Activated naive CD4-positive, alpha-beta T cell treated with anti-CD3 and anti-CD28 coated beads, Interleukin-2, amount 10 ng/mL, durations not matched to agents 7 days and 5 days (primary cell): ENCODE measurements at regions of chr19 and their contacts with region 1.

Region 1: GRCh38 chr19:8355631-8356402 is 8.1 kb upstream of the ANGPTL4 start:
- DNase-seq: no peak
- H3K4me3 Mint-ChIP-seq: no peak overlapping the region
- H3K27ac Mint-ChIP-seq: no peak overlapping the region
- H3K4me1 Mint-ChIP-seq: peaks cover 3% of the 10 kb centered on the region
- H3K27me3 Mint-ChIP-seq: peaks cover 53% of the 10 kb centered on the region

Region 2: GRCh38 chr19:8224394-8225145 is 131.2 kb before region 1 on chr19:
- CTCF ChIA-PET with region 1: no interaction called
- DNase-seq: no peak
- H3K4me3 Mint-ChIP-seq: no peak overlapping the region
- H3K27ac Mint-ChIP-seq: peak overlapping the region; percentile 33
- H3K4me1 Mint-ChIP-seq: no peaks in the 10 kb centered on the region
- H3K27me3 Mint-ChIP-seq: no peaks in the 10 kb centered on the region

Region 3: GRCh38 chr19:8342684-8343482 is 12.9 kb before region 1 on chr19 and contains the start of gene KANK3:
- CTCF ChIA-PET with region 1: interaction called, 37 read pairs
- DNase-seq: peak; percentile 97
- H3K4me3 Mint-ChIP-seq: peak within 1 kb of the TSS; percentile 85
- H3K27ac Mint-ChIP-seq: peak within 1 kb of the TSS; percentile 77
- H3K4me1 Mint-ChIP-seq: peaks cover 18% of the 10 kb centered on the region
- H3K27me3 Mint-ChIP-seq: peaks cover 82% of the 10 kb centered on the region

Region 4: GRCh38 chr19:8389891-8390616 is 34.2 kb after region 1 on chr19 and contains the start of gene RAB11B:
- CTCF ChIA-PET with region 1: interaction called, 23 read pairs
- DNase-seq: peak; percentile 99
- H3K4me3 Mint-ChIP-seq: peak within 1 kb of the TSS; percentile 93
- H3K27ac Mint-ChIP-seq: peak within 1 kb of the TSS; percentile 99
- H3K4me1 Mint-ChIP-seq: peaks cover 32% of the 10 kb centered on the region
- H3K27me3 Mint-ChIP-seq: no peaks in the 10 kb centered on the region

Region 5: GRCh38 chr19:8396563-8397203 is 40.9 kb after region 1 on chr19:
- CTCF ChIA-PET with region 1: interaction called, 23 read pairs
- DNase-seq: peak; percentile 84
- H3K4me3 Mint-ChIP-seq: no peak overlapping the region
- H3K27ac Mint-ChIP-seq: peak overlapping the region; percentile 29
- H3K4me1 Mint-ChIP-seq: peaks cover 26% of the 10 kb centered on the region
- H3K27me3 Mint-ChIP-seq: no peaks in the 10 kb centered on the region

Region 6: GRCh38 chr19:8412783-8413628 is 57.2 kb after region 1 on chr19 and contains the start of gene MARCHF2:
- CTCF ChIA-PET with region 1: interaction called, 12 read pairs
- DNase-seq: peak; percentile 96
- H3K4me3 Mint-ChIP-seq: peak within 1 kb of the TSS; percentile 66
- H3K27ac Mint-ChIP-seq: peak within 1 kb of the TSS; percentile 17
- H3K4me1 Mint-ChIP-seq: peaks cover 10% of the 10 kb centered on the region
- H3K27me3 Mint-ChIP-seq: peaks cover 8% of the 10 kb centered on the region

Region 7: DNA sequence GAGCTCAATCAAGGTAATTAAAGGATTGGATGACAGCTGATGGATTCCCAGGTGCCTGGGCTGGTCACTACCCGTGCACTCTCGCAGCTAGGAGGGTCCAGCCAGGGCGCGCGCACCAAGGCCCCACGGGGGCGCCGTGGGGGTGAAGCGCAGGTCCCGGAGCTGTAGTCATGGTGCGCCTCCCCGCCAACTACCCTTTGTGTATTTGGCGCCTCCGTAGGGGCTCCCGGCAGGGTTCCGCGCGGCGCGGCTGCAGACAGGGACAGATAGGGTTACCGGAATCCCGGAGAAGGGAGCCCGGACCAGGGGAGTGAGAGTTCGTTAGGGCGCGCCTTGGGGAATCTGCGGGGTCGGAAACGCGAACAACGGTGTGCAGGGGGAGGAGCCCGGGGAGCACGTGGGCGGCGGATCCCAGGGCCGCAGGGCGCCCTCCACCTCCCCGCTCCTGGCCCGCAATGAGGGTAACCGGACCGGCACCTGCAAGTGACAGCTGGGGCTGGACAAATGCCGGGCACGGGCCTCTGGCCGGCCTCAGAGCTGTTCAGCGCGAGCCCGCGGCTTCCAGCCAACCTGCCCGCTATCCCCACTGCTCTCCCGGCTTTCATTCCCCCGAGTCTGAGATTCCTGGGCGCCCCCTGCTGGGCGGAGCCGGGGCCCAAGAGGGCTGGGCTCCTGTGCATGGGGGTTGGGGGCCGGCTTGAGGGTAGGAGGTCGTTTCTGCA is 150.0 kb after region 1 on chr19:
- CTCF ChIA-PET with region 1: interaction called, 16 read pairs
- DNase-seq: peak; percentile 72
- H3K4me3 Mint-ChIP-seq: peak overlapping the region; percentile 85
- H3K27ac Mint-ChIP-seq: peak overlapping the region; percentile 82
- H3K4me1 Mint-ChIP-seq: peaks cover 35% of the 10 kb centered on the region
- H3K27me3 Mint-ChIP-seq: peaks cover 7% of the 10 kb centered on the region

Region 8: GRCh38 chr19:8526345-8527067 is 170.7 kb after region 1 on chr19:
- CTCF ChIA-PET with region 1: no interaction called
- DNase-seq: no peak
- H3K4me3 Mint-ChIP-seq: no peak overlapping the region
- H3K27ac Mint-ChIP-seq: no peak overlapping the region
- H3K4me1 Mint-ChIP-seq: peaks cover 2% of the 10 kb centered on the region
- H3K27me3 Mint-ChIP-seq: no peaks in the 10 kb centered on the region

Region 9: DNA sequence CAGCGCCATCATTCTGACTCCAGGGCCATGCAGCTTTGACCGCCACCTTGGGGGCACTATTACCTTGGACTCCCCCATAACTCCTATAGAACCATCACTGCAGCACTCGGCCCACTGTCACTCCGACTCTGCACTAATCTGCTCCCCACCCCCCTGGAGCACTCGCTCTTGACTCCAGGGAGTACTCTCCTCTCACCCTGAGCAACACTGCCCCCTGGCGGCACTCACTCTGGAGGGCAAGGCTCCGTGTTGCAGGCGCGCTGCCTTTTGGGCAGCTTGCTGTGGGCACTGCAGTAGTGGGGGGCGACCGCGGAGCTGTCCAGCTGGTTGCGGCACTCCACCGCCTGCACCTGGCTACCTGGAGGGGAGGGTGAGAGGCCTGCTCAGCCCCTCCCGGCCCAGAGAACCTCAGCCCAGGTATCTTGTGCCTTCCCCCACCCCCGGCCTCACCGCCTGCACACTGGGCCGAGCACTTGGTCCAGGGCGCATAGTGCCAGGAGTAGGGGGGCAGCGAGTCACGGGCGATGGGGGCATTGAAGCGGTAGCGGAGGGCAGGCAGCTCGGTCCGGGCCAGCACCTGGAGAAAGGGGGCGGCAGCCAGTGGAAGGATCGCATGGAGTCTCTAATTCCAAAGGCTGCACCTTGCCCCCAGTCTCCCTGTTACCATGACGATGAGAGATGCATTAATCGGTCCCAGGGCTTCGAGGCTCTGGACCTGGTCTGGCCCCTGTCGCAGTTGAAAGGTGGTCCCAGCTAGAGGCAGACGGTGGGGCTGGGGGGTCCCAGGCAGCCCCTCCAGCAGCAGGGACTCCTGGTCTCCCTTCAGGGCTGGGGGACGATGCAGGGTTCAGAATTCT is 230.3 kb after region 1 on chr19:
- CTCF ChIA-PET with region 1: interaction called, 49 read pairs
- DNase-seq: peak; percentile 74
- H3K4me3 Mint-ChIP-seq: no peak overlapping the region
- H3K27ac Mint-ChIP-seq: no peak overlapping the region
- H3K4me1 Mint-ChIP-seq: no peaks in the 10 kb centered on the region
- H3K27me3 Mint-ChIP-seq: peaks cover 19% of the 10 kb centered on the region